ENCODE measurements at regions of chr22 and their contacts with region 1.

Region 1: GRCh38 chr22:31211862-31212730 is at the start of gene LIMK2:
- DNase-seq: peak; percentile 45
- H3K4me3 ChIP-seq: peak within 1 kb of the TSS; percentile 96
- CTCF ChIP-seq: peak; percentile 77

Region 2: GRCh38 chr22:31179356-31179755 is 32.7 kb before region 1 on chr22:
- in situ Hi-C with region 1: loop called (anchors 5 kb)
- DNase-seq: peak; percentile 26
- H3K4me3 ChIP-seq: no peak overlapping the region
- CTCF ChIP-seq: no peak